Natural killer cell (primary cell): ENCODE measurements at regions of chr9 and their contacts with region 1.

Region 1: DNA sequence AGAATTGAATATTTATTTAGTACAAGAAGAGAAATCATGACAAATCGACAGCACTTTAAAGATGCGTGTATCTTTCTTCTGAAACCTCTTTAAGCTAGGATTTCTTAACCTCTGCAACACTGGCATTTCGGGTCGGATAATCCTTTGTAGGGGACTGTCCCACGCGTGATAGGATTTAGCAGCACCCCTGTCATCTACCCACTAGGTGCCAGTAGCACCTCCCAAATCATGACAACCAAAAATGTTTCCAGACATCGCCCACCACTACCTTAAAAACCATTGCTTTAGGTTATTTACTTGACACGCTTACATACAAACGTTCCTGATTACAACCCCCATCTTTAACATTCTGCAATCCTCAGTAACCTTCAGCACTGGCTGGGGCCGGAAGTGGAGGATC is 223.1 kb downstream of the TRIM32 start:
- DNase-seq: no peak
- ATAC-seq: no peak
- H3K4me3 ChIP-seq: no peak overlapping the region
- H3K4me3 Mint-ChIP-seq: no peak overlapping the region
- H3K27ac ChIP-seq: no peak overlapping the region
- H3K27ac Mint-ChIP-seq: no peak overlapping the region
- H3K4me1 ChIP-seq: no peaks in the 10 kb centered on the region
- H3K4me1 Mint-ChIP-seq: no peaks in the 10 kb centered on the region
- H3K27me3 ChIP-seq: no peaks in the 10 kb centered on the region
- H3K27me3 Mint-ChIP-seq: peaks cover 0 to 2% of the 10 kb centered on the region in 2 donors
- CTCF ChIP-seq: no peak

Region 2: GRCh38 chr9:115164511-115164974 is 1745.7 kb before region 1 on chr9:
- intact Hi-C with region 1: no loop called
- DNase-seq: no peak
- ATAC-seq: no peak
- H3K4me3 ChIP-seq: no peak overlapping the region
- H3K4me3 Mint-ChIP-seq: no peak overlapping the region
- H3K27ac ChIP-seq: no peak overlapping the region
- H3K27ac Mint-ChIP-seq: no peak overlapping the region
- H3K4me1 ChIP-seq: no peaks in the 10 kb centered on the region
- H3K4me1 Mint-ChIP-seq: no peaks in the 10 kb centered on the region
- H3K27me3 ChIP-seq: no peaks in the 10 kb centered on the region
- H3K27me3 Mint-ChIP-seq: peaks cover 0 to 8% of the 10 kb centered on the region in 2 donors
- CTCF ChIP-seq: no peak

Region 3: GRCh38 chr9:116891424-116891823 is 18.8 kb before region 1 on chr9:
- intact Hi-C with region 1: no loop called
- DNase-seq: no peak
- ATAC-seq: no peak
- H3K4me3 ChIP-seq: no peak overlapping the region
- H3K4me3 Mint-ChIP-seq: no peak overlapping the region
- H3K27ac ChIP-seq: no peak overlapping the region
- H3K27ac Mint-ChIP-seq: no peak overlapping the region
- H3K4me1 ChIP-seq: no peaks in the 10 kb centered on the region
- H3K4me1 Mint-ChIP-seq: no peaks in the 10 kb centered on the region
- H3K27me3 ChIP-seq: no peaks in the 10 kb centered on the region
- H3K27me3 Mint-ChIP-seq: peaks cover 0 to 9% of the 10 kb centered on the region in 2 donors
- CTCF ChIP-seq: no peak

Region 4: DNA sequence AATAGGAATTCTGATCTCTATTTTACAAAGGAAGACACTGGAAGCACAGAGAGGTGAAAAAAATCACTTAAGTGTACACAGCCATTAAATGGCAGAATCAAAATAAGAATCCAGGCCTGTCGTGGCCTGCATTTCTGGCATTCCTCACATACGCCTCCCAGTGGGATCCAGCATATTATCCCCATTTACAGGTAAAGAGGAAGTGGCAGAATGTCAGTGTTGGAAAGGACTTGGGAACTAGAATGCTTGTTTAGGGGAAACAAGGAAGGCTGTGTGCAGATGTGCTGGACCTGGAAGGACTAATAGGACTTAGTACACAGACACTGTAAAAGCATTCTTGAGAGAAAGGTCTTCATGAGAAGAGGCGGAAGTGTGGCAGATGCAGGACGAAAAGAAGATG is 18.7 kb after region 1 on chr9:
- intact Hi-C with region 1: no loop called
- DNase-seq: no peak
- ATAC-seq: no peak
- H3K4me3 ChIP-seq: no peak overlapping the region
- H3K4me3 Mint-ChIP-seq: no peak overlapping the region
- H3K27ac ChIP-seq: no peak overlapping the region
- H3K27ac Mint-ChIP-seq: no peak overlapping the region
- H3K4me1 ChIP-seq: no peaks in the 10 kb centered on the region
- H3K4me1 Mint-ChIP-seq: no peaks in the 10 kb centered on the region
- H3K27me3 ChIP-seq: no peaks in the 10 kb centered on the region
- H3K27me3 Mint-ChIP-seq: peaks cover 0 to 7% of the 10 kb centered on the region in 2 donors
- CTCF ChIP-seq: no peak

Region 5: DNA sequence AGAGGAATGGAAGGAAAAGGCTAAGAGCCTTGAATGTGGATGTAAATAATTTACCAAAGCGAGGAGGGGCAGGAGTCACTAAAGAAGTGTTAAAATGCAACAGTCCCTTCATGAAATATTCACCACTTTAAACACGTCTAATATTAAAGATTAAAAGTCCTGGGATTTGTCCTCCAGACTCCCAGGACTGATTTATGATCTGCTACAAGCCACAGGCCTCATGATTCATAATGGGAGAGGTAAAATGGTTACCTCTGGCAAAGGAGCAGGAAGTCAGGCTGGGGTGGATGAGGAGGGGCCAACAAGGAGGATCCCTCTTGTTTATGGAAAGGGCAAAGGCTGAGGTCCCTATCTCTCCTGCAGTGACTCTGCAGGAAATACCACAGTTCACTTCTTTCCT is 69.3 kb after region 1 on chr9:
- intact Hi-C with region 1: loop called (anchors 10 kb)
- DNase-seq: no peak
- ATAC-seq: no peak
- H3K4me3 ChIP-seq: no peak overlapping the region
- H3K4me3 Mint-ChIP-seq: no peak overlapping the region
- H3K27ac ChIP-seq: no peak overlapping the region
- H3K27ac Mint-ChIP-seq: no peak overlapping the region
- H3K4me1 ChIP-seq: no peaks in the 10 kb centered on the region
- H3K4me1 Mint-ChIP-seq: no peaks in the 10 kb centered on the region
- H3K27me3 ChIP-seq: no peaks in the 10 kb centered on the region
- H3K27me3 Mint-ChIP-seq: peaks cover 0 to 3% of the 10 kb centered on the region in 2 donors
- CTCF ChIP-seq: no peak

Region 6: GRCh38 chr9:117466119-117466518 is 555.9 kb after region 1 on chr9:
- intact Hi-C with region 1: no loop called
- DNase-seq: no peak
- ATAC-seq: no peak
- H3K4me3 ChIP-seq: no peak overlapping the region
- H3K4me3 Mint-ChIP-seq: no peak overlapping the region
- H3K27ac ChIP-seq: no peak overlapping the region
- H3K27ac Mint-ChIP-seq: no peak overlapping the region
- H3K4me1 ChIP-seq: no peaks in the 10 kb centered on the region
- H3K4me1 Mint-ChIP-seq: no peaks in the 10 kb centered on the region
- H3K27me3 ChIP-seq: no peaks in the 10 kb centered on the region
- H3K27me3 Mint-ChIP-seq: peaks cover 3 to 6% of the 10 kb centered on the region in 2 donors
- CTCF ChIP-seq: no peak